ENCODE measurements at regions of chr2 and their contacts with region 1.

Region 1: DNA sequence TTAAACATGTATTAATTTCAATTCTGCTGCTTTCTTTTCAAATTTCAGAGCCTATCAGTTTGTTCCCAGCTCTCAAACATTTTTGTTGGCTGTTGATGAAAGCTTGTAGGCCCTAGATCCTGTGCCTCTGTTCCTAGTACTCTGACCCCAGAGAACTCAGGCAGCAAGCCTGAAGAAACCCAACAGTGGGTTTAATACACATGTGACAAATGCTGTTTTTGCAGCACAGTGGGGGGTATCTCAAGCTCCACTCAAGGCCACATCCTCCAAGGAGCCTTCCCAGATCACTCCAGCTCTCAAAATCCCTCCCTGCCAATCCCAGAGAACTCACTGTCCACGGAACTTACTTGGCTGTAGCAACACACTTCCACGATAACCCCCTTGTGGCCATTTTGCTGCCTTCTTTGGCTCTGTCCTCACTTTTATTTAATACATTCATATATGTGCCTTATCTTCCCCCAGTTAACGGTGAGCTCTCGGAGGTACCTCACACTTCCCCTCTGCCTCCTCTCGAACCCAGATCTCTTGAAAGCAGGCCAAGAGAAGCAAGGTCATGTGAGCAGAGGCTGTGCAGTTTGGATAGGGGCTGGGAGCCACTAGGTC is 122.4 kb downstream of the TNS1 start:
- DNase-seq: no peak
- H3K4me3 ChIP-seq: no peak overlapping the region
- CTCF ChIP-seq: no peak

Region 2: GRCh38 chr2:217804786-217805667 is 75.4 kb before region 1 on chr2:
- CTCF ChIA-PET with region 1: no interaction called
- POLR2A ChIA-PET with region 1: no interaction called
- DNase-seq: no peak
- H3K4me3 ChIP-seq: no peak overlapping the region
- CTCF ChIP-seq: no peak

Region 3: DNA sequence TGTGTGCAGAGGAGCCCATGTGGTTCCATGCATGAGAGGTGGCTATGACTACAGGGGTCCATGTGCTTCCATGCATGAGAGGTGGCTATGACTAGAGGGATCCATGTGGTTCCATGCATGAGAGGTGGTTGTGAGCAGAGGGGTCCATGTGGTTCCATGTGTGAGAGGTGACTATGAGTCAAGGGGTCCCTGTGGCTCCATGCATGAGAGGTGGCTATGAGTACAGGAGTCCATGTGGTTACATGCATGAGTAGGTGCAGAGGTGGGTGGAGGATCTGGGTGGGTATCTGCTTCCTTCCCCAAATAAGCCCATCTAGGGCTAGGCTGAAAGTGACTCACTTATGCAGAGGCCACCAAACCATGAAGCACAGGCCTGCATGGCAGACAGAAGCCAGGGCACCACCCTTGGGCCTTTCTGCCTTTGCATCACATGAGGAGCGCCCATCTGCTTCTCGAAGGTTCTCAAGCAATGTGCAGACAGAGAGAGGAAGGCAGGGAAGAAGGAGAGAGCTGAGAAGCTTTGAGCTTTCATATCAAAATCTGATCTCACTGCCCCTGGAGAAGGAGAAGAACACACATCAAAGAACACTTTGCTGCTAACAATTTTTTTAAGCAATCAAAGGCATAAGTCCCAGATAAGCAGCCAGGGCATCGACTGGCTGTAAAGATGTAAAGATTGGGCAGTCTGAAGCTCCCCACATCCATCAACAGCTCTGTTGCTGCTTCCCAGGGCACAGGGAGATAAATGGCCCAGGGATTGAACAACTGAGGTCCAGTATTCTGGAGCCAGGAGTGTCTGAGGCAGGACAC is 15.2 kb before region 1 on chr2:
- CTCF ChIA-PET with region 1: interaction called, 40 read pairs
- POLR2A ChIA-PET with region 1: no interaction called
- DNase-seq: no peak
- H3K4me3 ChIP-seq: no peak overlapping the region
- CTCF ChIP-seq: no peak

Region 4: GRCh38 chr2:218438601-218438995 is 558.2 kb after region 1 on chr2:
- CTCF ChIA-PET with region 1: no interaction called
- POLR2A ChIA-PET with region 1: no interaction called
- DNase-seq: no peak
- H3K4me3 ChIP-seq: no peak overlapping the region
- CTCF ChIP-seq: no peak

Region 5: GRCh38 chr2:219433666-219434467 is 1553.5 kb after region 1 on chr2:
- CTCF ChIA-PET with region 1: no interaction called
- POLR2A ChIA-PET with region 1: no interaction called
- DNase-seq: no peak
- H3K4me3 ChIP-seq: no peak overlapping the region
- CTCF ChIP-seq: peak; percentile 49

Measured in AG04449 (cell line).